ENCODE measurements at regions of chr1 and their contacts with region 1.

Region 1: GRCh38 chr1:173420330-173420806 is 56.8 kb upstream of the PRDX6 start:
- DNase-seq: peak; percentile 83
- ATAC-seq: peak; percentile 98
- H3K4me3 ChIP-seq: no peak overlapping the region
- H3K27ac ChIP-seq: peak overlapping the region; percentile 40; the same call in 1 of the 2 replicates
- H3K4me1 ChIP-seq: peaks cover 3% of the 10 kb centered on the region; the same call in 1 of the 2 replicates
- H3K27me3 ChIP-seq: no peaks in the 10 kb centered on the region
- CTCF ChIP-seq: peak; percentile 85
- POLR2A ChIP-seq: no peak
- RAD21 ChIP-seq: peak; percentile 85

Region 2: GRCh38 chr1:173255214-173255813 is 165.1 kb before region 1 on chr1:
- CTCF ChIA-PET with region 1: interaction called, 3 read pairs
- POLR2A ChIA-PET with region 1: no interaction called
- dilution Hi-C with region 1: no loop called
- in situ Hi-C with region 1: no loop called
- intact Hi-C with region 1: loop called (anchors 1 kb)
- DNase-seq: peak; percentile 61
- ATAC-seq: peak; percentile 80; the same call in 1 of the 2 replicates
- H3K4me3 ChIP-seq: no peak overlapping the region
- H3K27ac ChIP-seq: no peak overlapping the region
- H3K4me1 ChIP-seq: no peaks in the 10 kb centered on the region; the same call in 1 of the 2 replicates
- H3K27me3 ChIP-seq: no peaks in the 10 kb centered on the region
- CTCF ChIP-seq: peak; percentile 76
- POLR2A ChIP-seq: no peak
- RAD21 ChIP-seq: peak; percentile 65

Region 3: DNA sequence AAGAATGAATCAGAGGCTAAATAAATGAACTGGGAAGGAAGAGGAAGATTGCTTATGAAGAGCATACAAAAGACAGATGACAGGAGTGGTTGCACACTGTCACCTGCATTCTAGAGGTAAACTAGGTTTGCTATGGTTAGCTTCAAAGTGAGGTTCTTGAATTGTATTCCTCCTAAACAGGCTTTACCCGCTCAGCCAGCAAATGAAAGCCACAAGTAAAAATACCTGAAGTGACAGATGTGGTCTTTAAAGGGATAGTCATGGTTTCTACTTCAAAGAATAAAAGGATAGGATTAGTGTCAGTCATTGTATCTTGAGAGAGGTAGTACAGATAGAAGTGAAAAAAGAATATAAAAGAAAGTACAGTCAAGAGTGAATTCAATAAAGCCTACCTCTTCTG is 24.4 kb after region 1 on chr1:
- CTCF ChIA-PET with region 1: no interaction called
- POLR2A ChIA-PET with region 1: no interaction called
- dilution Hi-C with region 1: no loop called
- in situ Hi-C with region 1: no loop called
- intact Hi-C with region 1: no loop called
- DNase-seq: no peak
- ATAC-seq: no peak
- H3K4me3 ChIP-seq: no peak overlapping the region
- H3K27ac ChIP-seq: no peak overlapping the region
- H3K4me1 ChIP-seq: peaks cover 2% of the 10 kb centered on the region; the same call in 1 of the 2 replicates
- H3K27me3 ChIP-seq: no peaks in the 10 kb centered on the region
- CTCF ChIP-seq: no peak
- POLR2A ChIP-seq: no peak
- RAD21 ChIP-seq: no peak

Region 4: DNA sequence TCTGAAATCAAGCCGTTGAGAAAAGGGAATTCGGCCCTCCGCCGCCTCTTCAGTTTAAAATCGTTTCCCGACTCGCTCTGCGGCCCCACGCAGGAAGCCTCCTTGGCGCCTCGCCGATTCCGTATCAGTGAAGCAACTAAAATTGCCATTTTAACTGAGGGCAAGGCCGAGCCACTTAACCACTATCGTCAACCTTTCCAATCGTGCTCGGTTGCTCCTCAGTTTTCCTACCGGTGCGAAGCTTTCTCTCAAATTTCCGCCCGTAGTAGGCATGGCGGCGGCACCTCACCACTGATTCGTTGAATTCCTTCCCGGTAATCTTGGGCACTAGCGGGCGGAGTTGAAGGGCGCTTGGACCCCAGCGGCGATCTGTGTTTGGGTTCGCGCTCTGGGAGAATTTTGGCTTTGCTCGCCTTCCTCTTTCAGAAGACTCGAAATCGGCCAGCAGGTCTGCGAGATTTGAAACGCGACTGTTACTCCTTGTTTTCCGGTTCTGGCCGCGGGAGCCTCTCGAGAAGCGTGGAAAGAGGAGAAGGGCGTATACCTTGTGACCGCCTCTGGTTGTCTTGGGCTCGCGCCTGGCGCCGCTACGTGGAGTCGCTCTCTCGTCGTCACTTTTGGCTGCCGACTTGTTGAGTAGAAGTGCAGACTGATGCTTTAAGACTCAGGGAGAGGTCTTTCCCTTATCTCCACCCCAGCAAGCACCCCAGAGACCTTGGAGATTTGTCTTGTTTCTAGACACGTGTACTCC is 404.1 kb after region 1 on chr1 and contains the starts of genes CENPL and DARS2:
- CTCF ChIA-PET with region 1: no interaction called
- POLR2A ChIA-PET with region 1: no interaction called
- dilution Hi-C with region 1: no loop called
- in situ Hi-C with region 1: no loop called
- intact Hi-C with region 1: loop called (anchors 1 kb)
- DNase-seq: peak; percentile 98
- ATAC-seq: peak; percentile 97
- H3K4me3 ChIP-seq: peak within 1 kb of the TSS; percentile 65
- H3K27ac ChIP-seq: peak within 1 kb of the TSS; percentile 84
- H3K4me1 ChIP-seq: peaks cover 2% of the 10 kb centered on the region; the same call in 1 of the 2 replicates
- H3K27me3 ChIP-seq: no peaks in the 10 kb centered on the region
- CTCF ChIP-seq: no peak
- POLR2A ChIP-seq: peak; percentile 86; the same call in 1 of the 2 replicates
- RAD21 ChIP-seq: no peak
- total RNA-seq, gene CENPL: 21.1 and 21.9 TPM in 2 replicates
- total RNA-seq, gene DARS2: 18.8 and 22.8 TPM in 2 replicates

Region 5: DNA sequence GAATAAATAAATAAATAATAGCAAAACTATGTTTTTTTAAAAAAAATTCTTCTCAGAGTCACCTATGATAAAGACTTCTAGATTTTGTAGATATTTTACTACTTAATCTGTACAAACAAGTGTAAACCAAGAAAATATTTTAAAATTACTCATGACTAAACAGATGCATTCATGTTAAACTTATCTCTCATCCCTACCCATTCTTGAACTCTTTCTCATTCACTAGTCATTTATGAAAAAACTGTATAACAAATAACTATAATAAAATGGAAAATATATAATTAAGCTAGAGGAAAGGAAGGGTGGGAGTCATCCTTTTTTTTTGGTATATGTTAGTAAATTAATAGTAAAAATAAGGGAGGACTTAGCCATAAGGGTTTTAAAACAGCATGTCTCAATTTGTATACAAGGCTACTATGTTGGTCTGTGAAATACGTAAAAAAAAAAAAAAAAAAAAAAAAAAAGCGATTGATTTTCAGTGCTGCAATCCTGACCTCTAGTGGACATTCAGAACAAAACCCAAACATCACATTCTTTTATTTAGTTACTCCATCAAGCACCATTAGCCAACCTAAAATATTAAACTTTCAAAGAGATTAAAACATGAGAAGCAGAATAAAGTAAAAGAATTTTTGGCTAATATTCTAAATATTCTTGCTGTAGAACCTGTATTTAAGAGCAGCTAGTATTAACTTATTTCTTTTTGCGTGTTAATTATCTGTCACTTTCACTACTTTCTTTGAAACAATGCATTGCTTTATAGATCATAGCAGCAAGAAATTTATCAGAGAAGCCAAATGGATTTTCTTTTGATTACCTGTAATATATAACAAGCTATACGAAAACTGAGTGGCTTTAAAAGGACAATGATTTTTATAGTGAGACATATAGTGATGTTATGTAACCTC is 1323.5 kb after region 1 on chr1:
- CTCF ChIA-PET with region 1: no interaction called
- POLR2A ChIA-PET with region 1: no interaction called
- dilution Hi-C with region 1: no loop called
- in situ Hi-C with region 1: no loop called
- intact Hi-C with region 1: loop called (anchors 5 kb)
- DNase-seq: peak; percentile 63
- ATAC-seq: peak; percentile 51
- H3K4me3 ChIP-seq: no peak overlapping the region
- H3K27ac ChIP-seq: no peak overlapping the region
- H3K4me1 ChIP-seq: no peaks in the 10 kb centered on the region
- H3K27me3 ChIP-seq: no peaks in the 10 kb centered on the region
- CTCF ChIP-seq: peak; percentile 81
- POLR2A ChIP-seq: no peak
- RAD21 ChIP-seq: peak; percentile 72

Measured in IMR-90 (cell line).